ENCODE measurements at regions of chr7 and their contacts with region 1.

Region 1: GRCh38 chr7:22109761-22110160 is 164.1 kb upstream of the CDCA7L start:
- DNase-seq: peak; percentile 51 to 58
- H3K4me3 ChIP-seq: no peak overlapping the region
- H3K27ac ChIP-seq: no peak overlapping the region
- H3K4me1 ChIP-seq: peaks cover 0 to 14% (median 7%) of the 10 kb centered on the region in 4 donors
- H3K27me3 ChIP-seq: no peaks in the 10 kb centered on the region
- CTCF ChIP-seq: no peak
- EP300 ChIP-seq: no peak
- POLR2A ChIP-seq: no peak

Region 2: GRCh38 chr7:22061775-22062174 is 48.0 kb before region 1 on chr7:
- intact Hi-C with region 1: no loop called
- DNase-seq: peak in 1 of 2 donors; percentile 22
- H3K4me3 ChIP-seq: no peak overlapping the region
- H3K27ac ChIP-seq: no peak overlapping the region
- H3K4me1 ChIP-seq: no peaks in the 10 kb centered on the region
- H3K27me3 ChIP-seq: peaks cover 0 to 6% (median 0%) of the 10 kb centered on the region in 3 donors
- CTCF ChIP-seq: no peak
- EP300 ChIP-seq: no peak
- POLR2A ChIP-seq: no peak

Region 3: DNA sequence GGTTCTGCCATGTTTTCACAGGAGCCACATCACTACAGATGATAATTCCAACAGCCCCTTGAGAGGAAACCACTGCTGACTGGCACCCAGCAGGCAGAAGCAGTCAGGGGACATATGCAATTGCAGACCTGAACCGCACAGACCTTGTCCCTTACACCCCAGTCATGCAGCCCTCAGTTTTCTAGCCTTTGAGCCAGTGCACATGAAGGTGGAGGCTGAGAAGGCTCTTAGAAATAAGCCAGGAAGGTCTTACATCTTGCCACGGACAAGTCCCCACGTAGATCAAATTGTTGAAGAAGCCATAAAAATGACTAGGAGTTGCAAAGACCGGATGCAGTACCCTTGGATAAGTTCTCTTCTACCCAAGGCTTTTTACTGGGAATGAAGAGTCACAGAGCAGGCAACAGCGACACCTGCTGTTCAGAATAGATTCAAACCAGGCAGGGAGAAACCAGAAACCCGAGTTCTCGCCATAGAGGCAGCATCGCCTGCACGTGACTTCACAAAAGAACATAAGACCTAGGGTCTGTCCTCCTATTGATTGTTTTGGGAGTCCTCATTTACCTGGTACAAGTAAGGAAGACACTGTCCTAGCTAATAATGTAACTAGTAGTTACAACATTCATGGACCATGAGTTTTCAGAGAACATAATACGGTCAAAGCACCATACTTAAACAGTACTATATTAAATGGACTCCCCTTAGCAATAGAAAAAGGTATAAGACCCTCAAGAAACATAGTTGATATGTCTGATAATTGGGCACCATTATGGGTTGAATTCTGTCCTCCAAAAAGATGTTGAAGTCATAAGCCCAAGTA is 379.1 kb after region 1 on chr7:
- intact Hi-C with region 1: loop called (anchors 5 kb)
- DNase-seq: peak; percentile 73 to 90
- H3K4me3 ChIP-seq: no peak overlapping the region
- H3K27ac ChIP-seq: no peak overlapping the region
- H3K4me1 ChIP-seq: no peaks in the 10 kb centered on the region
- H3K27me3 ChIP-seq: peaks cover 0 to 7% (median 0%) of the 10 kb centered on the region in 3 donors
- CTCF ChIP-seq: peak in 6 of 7 experiments; percentile 47 to 87 (median 79)
- EP300 ChIP-seq: no peak
- POLR2A ChIP-seq: no peak